SK-N-SH (cell line): ENCODE measurements at regions of chr11 and their contacts with region 1.

Region 1: DNA sequence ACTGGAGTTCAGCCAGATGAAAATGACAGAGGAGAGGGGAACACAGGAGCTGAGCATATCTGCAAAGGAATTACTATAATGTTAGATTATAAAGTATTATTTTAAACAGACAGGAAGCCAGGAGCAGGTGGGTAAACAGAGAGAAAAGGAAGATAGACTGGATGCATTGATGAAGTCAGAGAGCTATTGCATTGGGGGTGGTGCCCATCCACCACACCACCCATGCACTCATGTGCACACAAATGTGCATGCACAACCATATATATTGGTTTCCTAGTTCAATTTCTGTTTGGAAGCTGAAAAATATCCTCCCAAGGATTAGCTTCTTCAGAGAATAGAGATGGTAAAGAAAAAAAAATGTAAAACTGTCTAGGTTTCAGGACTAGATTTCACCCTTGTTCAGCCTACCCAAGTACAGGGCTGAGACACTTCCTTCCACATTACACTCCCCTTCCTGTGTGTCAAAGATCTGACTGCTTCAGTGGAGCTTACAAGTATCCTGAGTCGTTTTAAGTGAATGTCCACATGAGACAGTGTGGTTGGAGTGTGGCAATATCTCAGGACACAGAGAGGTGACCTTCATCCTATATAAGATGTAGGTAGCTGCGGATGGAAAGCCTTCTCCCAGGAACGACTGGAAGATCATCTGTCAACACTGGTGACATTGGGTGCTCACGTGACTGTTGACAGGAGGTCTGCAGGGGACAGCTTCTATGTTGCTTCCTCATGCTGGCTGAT is 12.2 kb upstream of the SMPD1 start:
- DNase-seq: no peak
- H3K4me3 ChIP-seq: no peak overlapping the region
- H3K27ac ChIP-seq: no peak overlapping the region
- H3K4me1 ChIP-seq: no peaks in the 10 kb centered on the region; a peak in 1 of 4 replicates
- H3K27me3 ChIP-seq: no peaks in the 10 kb centered on the region; the same call in 1 of the 2 replicates
- CTCF ChIP-seq: no peak
- EP300 ChIP-seq: no peak
- RAD21 ChIP-seq: no peak

Region 2: DNA sequence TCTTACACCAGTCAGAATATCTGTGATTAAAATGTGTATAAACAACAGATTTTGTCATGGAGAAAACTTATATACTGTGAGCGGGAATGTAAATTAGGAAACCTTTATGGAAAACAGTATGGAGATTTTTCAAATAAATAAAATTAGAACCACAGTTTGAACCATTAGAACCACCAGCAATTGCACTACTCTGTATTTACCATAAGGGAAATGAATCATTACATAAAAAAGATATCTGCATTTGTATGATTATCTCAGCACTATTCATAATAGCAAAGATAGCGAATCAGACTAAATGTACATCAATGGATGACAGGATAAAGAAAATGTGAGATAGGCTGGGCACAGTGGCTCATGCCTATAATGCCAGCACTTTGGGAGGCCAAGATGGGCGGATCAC is 631.5 kb before region 1 on chr11:
- CTCF ChIA-PET with region 1: no interaction called
- POLR2A ChIA-PET with region 1: no interaction called
- DNase-seq: no peak
- H3K4me3 ChIP-seq: no peak overlapping the region
- H3K27ac ChIP-seq: no peak overlapping the region
- H3K4me1 ChIP-seq: no peaks in the 10 kb centered on the region
- H3K27me3 ChIP-seq: no peaks in the 10 kb centered on the region
- CTCF ChIP-seq: no peak
- EP300 ChIP-seq: no peak
- RAD21 ChIP-seq: no peak

Region 3: DNA sequence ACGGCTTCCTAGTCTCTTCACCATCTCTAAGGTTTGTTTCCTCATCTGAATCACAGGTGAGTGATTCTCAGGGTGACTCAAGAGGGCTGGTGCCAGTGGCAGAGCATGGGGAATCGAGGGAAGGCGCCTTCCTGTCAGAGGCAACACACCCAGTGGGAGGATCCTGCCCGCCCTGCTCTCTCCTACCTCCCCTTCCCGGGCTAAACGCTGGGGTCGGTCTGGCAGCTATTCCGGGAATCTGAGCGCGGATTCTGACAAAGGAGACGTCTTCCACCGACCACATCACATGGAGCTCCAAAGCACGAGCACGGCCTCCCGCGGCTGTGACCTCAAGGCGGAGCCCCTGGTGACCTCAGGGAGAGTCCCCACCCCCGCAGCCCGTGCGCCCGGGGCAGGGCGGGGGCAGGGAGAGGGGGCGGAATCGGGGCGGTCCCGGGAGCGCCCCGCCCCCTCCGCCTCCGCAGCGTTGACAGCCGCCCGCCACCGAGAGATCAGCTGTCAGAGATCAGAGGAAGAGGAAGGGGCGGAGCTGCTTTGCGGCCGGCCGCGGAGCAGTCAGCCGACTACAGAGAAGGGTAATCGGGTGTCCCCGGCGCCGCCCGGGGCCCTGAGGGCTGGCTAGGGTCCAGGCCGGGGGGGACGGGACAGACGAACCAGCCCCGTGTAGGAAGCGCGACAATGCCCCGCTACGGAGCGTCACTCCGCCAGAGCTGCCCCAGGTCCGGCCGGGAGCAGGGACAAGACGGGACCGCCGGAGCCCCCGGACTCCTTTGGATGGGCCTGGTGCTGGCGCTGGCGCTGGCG is 12.1 kb after region 1 on chr11 and contains the start of gene SMPD1:
- CTCF ChIA-PET with region 1: interaction called, 33 read pairs
- POLR2A ChIA-PET with region 1: no interaction called
- DNase-seq: peak; percentile 97
- H3K4me3 ChIP-seq: peak within 1 kb of the TSS; percentile 89 to 91
- H3K27ac ChIP-seq: peak within 1 kb of the TSS; percentile 54 to 78; a peak in 3 of 4 replicates
- H3K4me1 ChIP-seq: peaks cover 3 to 14% of the 10 kb centered on the region in 2 experiments; a peak in 2 of 4 replicates
- H3K27me3 ChIP-seq: no peaks in the 10 kb centered on the region
- CTCF ChIP-seq: no peak
- EP300 ChIP-seq: no peak
- RAD21 ChIP-seq: no peak
- polyA plus RNA-seq, gene SMPD1: 59.6 and 69.2 TPM in 2 replicates

Region 4: DNA sequence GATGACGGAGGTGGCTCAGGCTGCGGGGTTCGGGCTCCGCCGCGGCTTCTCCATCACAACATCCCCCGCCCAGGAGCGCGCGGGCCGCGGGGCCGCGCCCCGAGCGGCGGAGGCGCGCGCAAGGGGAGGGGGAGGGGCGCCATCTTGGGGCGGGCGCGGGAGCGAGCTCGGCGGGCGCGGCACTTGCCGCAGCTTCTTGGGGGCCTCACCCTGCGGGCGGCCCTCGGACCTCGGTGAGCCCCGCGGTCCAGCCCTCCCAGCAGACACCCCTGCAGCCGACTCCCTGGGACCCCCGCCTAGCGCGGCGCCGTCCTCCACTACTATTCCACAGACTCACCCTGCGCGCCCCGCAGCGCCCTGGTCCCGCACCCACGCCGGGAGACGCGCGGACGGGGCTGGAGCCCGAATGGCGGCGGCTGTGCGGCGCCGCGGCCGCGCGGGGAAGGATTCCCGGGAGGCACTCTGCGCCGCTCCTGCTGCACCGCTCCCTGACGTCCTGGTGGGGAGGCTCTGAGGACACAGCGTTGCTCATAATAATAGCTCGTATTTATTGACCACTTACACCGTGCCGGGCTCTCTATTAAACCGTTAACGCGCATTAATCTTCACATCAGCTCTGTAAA is 41.0 kb after region 1 on chr11 and contains the start of gene APBB1:
- CTCF ChIA-PET with region 1: interaction called, 14 read pairs
- POLR2A ChIA-PET with region 1: no interaction called
- DNase-seq: peak; percentile 96
- H3K4me3 ChIP-seq: peak within 1 kb of the TSS; percentile 74 to 77
- H3K27ac ChIP-seq: peak within 1 kb of the TSS in 1 of 2 experiments; percentile 80; a peak in 2 of 4 replicates
- H3K4me1 ChIP-seq: peaks cover 0 to 11% of the 10 kb centered on the region in 2 experiments; a peak in 1 of 4 replicates
- H3K27me3 ChIP-seq: no peaks in the 10 kb centered on the region
- CTCF ChIP-seq: peak; percentile 19; the same call in 1 of the 2 replicates
- EP300 ChIP-seq: no peak
- RAD21 ChIP-seq: peak; percentile 6; the same call in 1 of the 2 replicates
- polyA plus RNA-seq, gene APBB1: 32.9 and 35.9 TPM in 2 replicates

Region 5: GRCh38 chr11:6452219-6452618 is 74.1 kb after region 1 on chr11:
- CTCF ChIA-PET with region 1: interaction called, 360 read pairs
- POLR2A ChIA-PET with region 1: no interaction called
- DNase-seq: no peak
- H3K4me3 ChIP-seq: no peak overlapping the region
- H3K27ac ChIP-seq: no peak overlapping the region
- H3K4me1 ChIP-seq: no peaks in the 10 kb centered on the region
- H3K27me3 ChIP-seq: no peaks in the 10 kb centered on the region
- CTCF ChIP-seq: no peak
- EP300 ChIP-seq: no peak
- RAD21 ChIP-seq: no peak

Region 6: GRCh38 chr11:6682936-6683861 is 305.1 kb after region 1 on chr11 and contains the start of gene MRPL17:
- CTCF ChIA-PET with region 1: interaction called, 14 read pairs
- POLR2A ChIA-PET with region 1: no interaction called
- DNase-seq: peak; percentile 95
- H3K4me3 ChIP-seq: peak within 1 kb of the TSS; percentile 99
- H3K27ac ChIP-seq: peak within 1 kb of the TSS; percentile 76 to 95
- H3K4me1 ChIP-seq: peaks cover 5 to 14% of the 10 kb centered on the region in 2 experiments; a peak in 3 of 4 replicates
- H3K27me3 ChIP-seq: no peaks in the 10 kb centered on the region
- CTCF ChIP-seq: peak; percentile 91
- EP300 ChIP-seq: peak in 1 of 2 experiments; percentile 13; a peak in 2 of 4 replicates
- RAD21 ChIP-seq: peak; percentile 81
- polyA plus RNA-seq, gene MRPL17: 88.3 and 88.6 TPM in 2 replicates